ENCODE measurements at regions of chr10 and their contacts with region 1.

Region 1: GRCh38 chr10:69792341-69792740 is 9.4 kb upstream of the COL13A1 start:
- DNase-seq: no peak
- H3K4me3 ChIP-seq: no peak overlapping the region
- H3K27ac ChIP-seq: no peak overlapping the region
- H3K4me1 ChIP-seq: peaks cover under 1% of the 10 kb centered on the region
- H3K27me3 ChIP-seq: no peaks in the 10 kb centered on the region
- CTCF ChIP-seq: no peak

Region 2: DNA sequence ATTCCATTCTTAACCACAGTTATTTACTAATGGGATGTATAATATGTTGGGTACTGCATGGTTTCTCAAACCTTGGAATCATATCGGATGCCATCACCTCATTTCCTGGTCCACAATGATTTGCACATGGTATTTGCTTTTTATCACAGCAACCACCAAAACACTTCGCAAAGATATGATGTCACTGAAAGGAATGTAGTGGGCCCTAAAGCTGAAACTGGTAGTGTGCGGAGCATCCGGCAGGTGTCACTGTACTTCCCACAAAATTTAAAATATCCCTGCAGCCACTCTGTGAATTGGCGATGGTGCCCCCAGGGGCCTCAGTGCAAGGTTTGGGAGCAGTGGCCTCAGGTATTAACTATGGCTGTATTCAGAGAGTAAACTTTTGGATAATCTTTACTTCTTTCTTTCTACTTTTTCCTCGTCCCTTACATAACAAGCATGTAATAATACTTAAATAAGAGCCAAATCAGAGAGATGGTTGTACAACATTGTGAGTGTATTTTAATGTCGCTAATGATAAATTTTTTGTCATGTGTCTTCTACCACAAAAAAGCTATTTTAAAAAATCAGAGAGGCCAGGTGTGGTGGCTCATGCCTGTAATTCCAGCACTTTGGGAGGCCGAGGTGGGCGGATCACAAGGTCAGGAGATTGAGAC is 96.1 kb before region 1 on chr10:
- CTCF ChIA-PET with region 1: no interaction called
- dilution Hi-C with region 1: loop called (anchors 5 kb)
- in situ Hi-C with region 1: no loop called
- intact Hi-C with region 1: no loop called
- DNase-seq: peak; percentile 87
- H3K4me3 ChIP-seq: no peak overlapping the region
- H3K27ac ChIP-seq: peak overlapping the region; percentile 49
- H3K4me1 ChIP-seq: no peaks in the 10 kb centered on the region
- H3K27me3 ChIP-seq: peaks cover 4% of the 10 kb centered on the region
- CTCF ChIP-seq: peak; percentile 69 to 72

Region 3: DNA sequence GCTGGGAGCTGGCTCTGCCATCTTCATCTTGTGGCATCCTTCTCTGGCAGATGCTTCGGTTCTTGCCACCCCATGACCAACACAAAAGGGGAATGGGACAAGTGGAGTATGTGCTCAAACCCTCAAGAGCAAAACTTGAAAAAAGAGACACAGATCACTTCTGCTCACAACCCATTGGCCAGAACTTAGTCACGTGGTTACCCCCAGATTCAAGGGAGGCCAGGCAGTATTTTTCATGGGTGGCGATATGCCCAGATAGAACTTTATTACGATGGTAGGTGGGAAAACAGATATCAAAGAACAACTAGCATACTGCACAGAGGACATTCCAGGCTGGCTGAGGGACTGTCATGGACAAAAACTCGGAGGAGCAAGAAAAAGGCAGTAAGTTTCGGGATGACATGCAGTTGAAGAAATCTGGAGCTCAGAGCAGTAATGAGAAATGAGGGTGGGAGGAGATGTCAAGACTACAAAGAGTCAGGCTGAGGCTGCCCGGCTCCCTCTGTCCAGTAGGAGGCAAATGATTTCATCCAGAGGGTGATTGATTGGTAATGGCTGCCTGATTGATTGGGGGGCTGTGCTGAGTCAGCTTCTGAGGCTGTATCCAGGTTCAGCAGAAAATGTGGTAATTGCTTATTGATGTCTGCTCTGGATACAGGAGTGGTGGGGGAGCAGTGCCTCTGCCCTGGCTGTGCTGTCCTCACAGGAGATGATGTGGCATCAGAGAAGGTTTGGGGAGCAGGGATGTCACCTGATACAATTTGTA is 34.6 kb after region 1 on chr10:
- CTCF ChIA-PET with region 1: no interaction called
- dilution Hi-C with region 1: loop called (anchors 5 kb)
- in situ Hi-C with region 1: no loop called
- intact Hi-C with region 1: no loop called
- DNase-seq: no peak
- H3K4me3 ChIP-seq: no peak overlapping the region
- H3K27ac ChIP-seq: no peak overlapping the region
- H3K4me1 ChIP-seq: no peaks in the 10 kb centered on the region
- H3K27me3 ChIP-seq: no peaks in the 10 kb centered on the region
- CTCF ChIP-seq: peak; percentile 3 to 4

Region 4: GRCh38 chr10:69901628-69902505 is 109.5 kb after region 1 on chr10:
- CTCF ChIA-PET with region 1: no interaction called
- dilution Hi-C with region 1: no loop called
- in situ Hi-C with region 1: loop called in 1 of 2 experiments (anchors 10 kb)
- intact Hi-C with region 1: no loop called
- DNase-seq: peak; percentile 19
- H3K4me3 ChIP-seq: no peak overlapping the region
- H3K27ac ChIP-seq: no peak overlapping the region
- H3K4me1 ChIP-seq: peaks cover 3% of the 10 kb centered on the region
- H3K27me3 ChIP-seq: no peaks in the 10 kb centered on the region
- CTCF ChIP-seq: peak; percentile 74 to 76

Region 5: DNA sequence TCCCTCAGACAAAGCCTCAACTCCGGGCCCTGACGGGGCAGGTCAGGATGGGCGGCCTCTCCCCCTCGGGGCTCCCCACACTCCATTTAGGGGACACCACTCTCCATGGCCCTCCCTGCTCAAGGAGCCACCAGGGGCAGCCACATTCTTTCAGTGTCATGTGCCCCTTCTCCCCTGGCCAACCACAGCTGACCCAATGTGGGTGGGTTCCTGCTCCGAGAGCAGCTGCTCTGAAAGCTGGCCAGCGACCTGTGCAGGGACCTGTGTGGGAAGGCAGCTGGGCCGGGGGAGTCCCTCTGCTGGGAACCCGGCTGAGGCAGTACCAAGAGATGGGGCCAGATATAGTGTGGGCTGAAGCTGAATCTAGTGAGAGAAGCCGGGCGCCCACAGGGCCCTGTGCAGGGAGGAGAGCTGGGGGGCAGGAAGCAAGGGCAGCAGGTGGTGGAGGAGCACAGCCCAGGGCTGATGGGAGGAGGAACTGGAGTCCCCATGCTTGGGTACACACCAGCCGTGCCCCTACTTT is 532.1 kb after region 1 on chr10:
- CTCF ChIA-PET with region 1: no interaction called
- dilution Hi-C with region 1: loop called (anchors 5 kb)
- in situ Hi-C with region 1: no loop called
- intact Hi-C with region 1: no loop called
- DNase-seq: no peak
- H3K4me3 ChIP-seq: no peak overlapping the region
- H3K27ac ChIP-seq: no peak overlapping the region
- H3K4me1 ChIP-seq: no peaks in the 10 kb centered on the region
- H3K27me3 ChIP-seq: no peaks in the 10 kb centered on the region
- CTCF ChIP-seq: no peak

Measured in mammary epithelial cell (primary cell).